ENCODE measurements at regions of chr10 and their contacts with region 1.

Region 1: GRCh38 chr10:128011175-128011979 is 104.5 kb downstream of the PTPRE start:
- DNase-seq: peak; percentile 86
- ATAC-seq: peak; percentile 97
- H3K4me3 Mint-ChIP-seq: no peak overlapping the region
- H3K27ac Mint-ChIP-seq: no peak overlapping the region
- H3K4me1 Mint-ChIP-seq: peaks cover 8% of the 10 kb centered on the region
- H3K27me3 Mint-ChIP-seq: peaks cover 8% of the 10 kb centered on the region
- CTCF ChIP-seq: peak; percentile 97

Region 2: DNA sequence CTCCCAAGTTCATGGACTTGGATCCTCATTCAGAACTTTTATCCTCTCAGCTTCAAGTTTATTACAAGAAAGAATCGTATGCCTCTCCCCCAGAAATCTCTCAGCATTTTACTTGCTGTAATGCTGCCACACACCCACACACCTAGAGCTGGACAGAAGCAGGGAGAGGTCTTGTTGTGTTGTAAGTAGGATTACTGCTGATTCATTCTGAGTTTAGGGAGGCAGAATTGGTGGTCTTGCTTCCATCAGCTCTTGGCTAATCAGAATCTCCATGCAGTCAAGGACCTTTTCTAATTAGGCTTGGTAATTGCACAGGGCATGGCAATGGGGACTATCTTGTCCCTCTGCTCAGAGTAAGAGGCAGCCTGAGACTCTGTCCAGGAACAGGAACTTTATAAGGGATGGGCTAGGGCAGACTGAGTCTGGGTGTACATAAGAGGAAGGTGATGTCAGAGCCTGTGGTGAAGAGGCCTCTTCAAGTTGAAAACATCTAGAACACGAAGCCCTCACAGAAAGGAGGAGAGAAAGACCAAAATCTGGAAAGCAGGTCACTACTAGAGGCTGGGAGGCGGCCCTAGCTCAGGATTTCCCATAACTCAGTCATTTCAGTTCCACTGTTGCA is 111.5 kb before region 1 on chr10:
- CTCF ChIA-PET with region 1: interaction called, 188 read pairs
- POLR2A ChIA-PET with region 1: no interaction called
- intact Hi-C with region 1: no loop called
- DNase-seq: no peak
- ATAC-seq: peak; percentile 37
- H3K4me3 Mint-ChIP-seq: no peak overlapping the region
- H3K27ac Mint-ChIP-seq: no peak overlapping the region
- H3K4me1 Mint-ChIP-seq: peaks cover 3% of the 10 kb centered on the region
- H3K27me3 Mint-ChIP-seq: peaks cover 10% of the 10 kb centered on the region
- CTCF ChIP-seq: no peak

Region 3: DNA sequence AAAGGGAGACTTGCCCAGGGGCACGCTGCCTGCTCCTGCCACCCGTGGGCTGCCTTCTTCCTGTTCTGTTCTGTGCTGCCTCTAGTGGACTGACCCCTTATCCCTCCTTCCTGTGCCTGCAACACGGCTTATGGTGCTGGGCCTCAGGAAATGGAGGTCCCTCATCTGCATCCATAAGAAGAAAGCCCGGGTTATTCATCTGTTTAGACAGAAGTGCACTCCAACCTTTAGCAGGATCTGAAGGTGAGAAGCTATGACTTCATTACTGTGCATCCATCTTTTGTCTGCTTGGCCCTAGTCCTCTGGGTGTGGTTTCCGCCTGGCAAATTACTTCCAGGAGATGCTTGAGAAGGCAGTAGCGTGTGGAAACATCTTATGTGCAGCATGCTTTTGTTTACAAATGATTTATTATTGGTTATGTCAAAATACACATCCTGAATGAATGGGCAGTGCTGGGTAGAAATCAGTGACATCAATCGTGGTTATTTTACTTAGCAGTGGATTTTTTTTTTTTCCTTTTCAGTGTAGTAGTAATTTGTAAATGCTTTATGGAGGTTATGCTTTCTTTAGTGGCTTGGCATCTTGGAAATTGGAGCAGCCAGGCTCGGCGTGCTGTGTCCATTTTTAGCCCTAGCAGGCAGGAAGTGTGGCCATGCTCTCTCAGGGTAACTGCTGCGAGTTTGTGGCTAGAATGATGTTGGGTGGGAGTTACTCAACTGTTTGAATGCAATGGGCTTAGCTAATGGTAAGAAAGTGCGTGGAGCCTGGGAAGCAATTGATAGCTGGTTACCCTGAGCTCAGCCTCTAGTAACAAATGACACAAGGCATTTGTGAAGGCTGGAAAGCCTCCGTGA is 91.7 kb before region 1 on chr10:
- CTCF ChIA-PET with region 1: interaction called, 12 read pairs
- POLR2A ChIA-PET with region 1: no interaction called
- intact Hi-C with region 1: no loop called
- DNase-seq: peak; percentile 24
- ATAC-seq: peak; percentile 64
- H3K4me3 Mint-ChIP-seq: no peak overlapping the region
- H3K27ac Mint-ChIP-seq: no peak overlapping the region
- H3K4me1 Mint-ChIP-seq: peaks cover 9% of the 10 kb centered on the region
- H3K27me3 Mint-ChIP-seq: no peaks in the 10 kb centered on the region
- CTCF ChIP-seq: no peak

Region 4: DNA sequence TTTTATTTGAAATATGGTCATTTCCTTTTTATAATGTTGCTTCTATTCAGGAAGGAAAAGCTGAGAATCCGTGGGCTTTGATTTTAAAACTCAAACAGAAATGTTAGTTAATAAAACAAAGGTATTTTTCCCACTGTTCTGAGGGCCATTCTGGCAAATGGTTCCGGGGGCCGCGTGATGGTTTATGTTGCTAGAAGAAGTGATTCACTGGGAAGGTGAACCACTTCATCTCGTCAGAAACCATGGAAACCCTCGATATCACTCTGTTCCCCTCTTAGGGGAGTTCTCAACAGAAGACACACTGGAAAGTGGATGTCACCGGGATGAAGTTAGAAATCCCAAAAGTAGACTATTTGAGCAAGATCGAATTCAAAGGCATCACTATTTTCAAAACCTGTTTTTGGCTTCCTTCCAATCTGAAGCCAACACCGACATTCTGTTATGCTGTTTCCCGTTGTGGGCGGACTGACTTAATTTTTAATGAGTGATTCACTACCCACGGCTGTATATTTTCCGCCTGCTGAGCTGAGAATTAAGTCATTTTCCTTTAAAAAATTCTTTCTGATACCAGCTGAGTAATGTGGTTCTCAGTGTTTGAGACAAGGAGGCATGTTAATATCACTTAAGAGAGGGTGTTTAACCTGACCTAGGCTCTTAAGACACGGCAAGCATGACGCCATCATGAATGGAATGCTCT is 20.4 kb before region 1 on chr10:
- CTCF ChIA-PET with region 1: interaction called, 33 read pairs
- POLR2A ChIA-PET with region 1: interaction called, 4 read pairs
- intact Hi-C with region 1: no loop called
- DNase-seq: peak; percentile 88
- ATAC-seq: peak; percentile 77
- H3K4me3 Mint-ChIP-seq: peak overlapping the region; percentile 50
- H3K27ac Mint-ChIP-seq: peak overlapping the region; percentile 95
- H3K4me1 Mint-ChIP-seq: peaks cover 48% of the 10 kb centered on the region
- H3K27me3 Mint-ChIP-seq: no peaks in the 10 kb centered on the region
- CTCF ChIP-seq: no peak

Region 5: GRCh38 chr10:128026614-128027300 is 15.4 kb after region 1 on chr10:
- CTCF ChIA-PET with region 1: interaction called, 20 read pairs
- POLR2A ChIA-PET with region 1: no interaction called
- intact Hi-C with region 1: no loop called
- DNase-seq: peak; percentile 84
- ATAC-seq: peak; percentile 87
- H3K4me3 Mint-ChIP-seq: no peak overlapping the region
- H3K27ac Mint-ChIP-seq: peak overlapping the region; percentile 75
- H3K4me1 Mint-ChIP-seq: peaks cover 31% of the 10 kb centered on the region
- H3K27me3 Mint-ChIP-seq: no peaks in the 10 kb centered on the region
- CTCF ChIP-seq: no peak

Region 6: GRCh38 chr10:128047351-128047750 is 36.0 kb after region 1 on chr10:
- CTCF ChIA-PET with region 1: interaction called, 16 read pairs
- POLR2A ChIA-PET with region 1: interaction called, 3 read pairs
- intact Hi-C with region 1: no loop called
- DNase-seq: peak; percentile 93
- ATAC-seq: peak; percentile 98
- H3K4me3 Mint-ChIP-seq: peak overlapping the region; percentile 90
- H3K27ac Mint-ChIP-seq: peak overlapping the region; percentile 95
- H3K4me1 Mint-ChIP-seq: peaks cover 41% of the 10 kb centered on the region
- H3K27me3 Mint-ChIP-seq: no peaks in the 10 kb centered on the region
- CTCF ChIP-seq: no peak

Region 7: DNA sequence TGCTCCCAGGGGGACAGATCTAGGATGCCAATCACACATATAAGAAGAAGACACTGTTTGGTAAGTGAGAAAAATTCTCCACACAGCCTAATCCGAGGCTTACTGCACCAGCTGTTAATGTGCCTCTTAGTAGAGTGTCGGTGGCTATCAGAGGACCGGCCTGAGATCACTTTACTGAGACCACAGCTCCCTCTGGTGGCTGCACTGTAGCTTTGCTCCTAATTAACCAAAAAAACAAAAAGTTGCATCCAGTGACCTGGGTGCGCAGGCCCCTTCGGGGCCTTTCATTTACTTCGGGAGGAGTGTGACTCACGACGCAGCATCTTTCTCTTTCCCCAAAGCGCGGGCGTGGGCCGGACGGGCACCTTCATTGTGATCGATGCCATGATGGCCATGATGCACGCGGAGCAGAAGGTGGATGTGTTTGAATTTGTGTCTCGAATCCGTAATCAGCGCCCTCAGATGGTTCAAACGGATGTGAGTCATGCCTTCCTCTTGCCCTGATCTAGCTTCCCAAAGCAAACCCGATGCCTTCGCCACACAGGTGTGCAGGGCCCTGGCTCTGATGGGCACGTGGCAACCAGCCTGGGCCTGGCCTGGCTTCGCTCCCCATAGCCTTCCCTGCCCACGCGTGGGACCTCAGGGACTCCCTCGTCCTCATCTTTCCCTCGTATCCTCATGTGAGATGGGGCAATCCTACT is 58.1 kb after region 1 on chr10:
- CTCF ChIA-PET with region 1: interaction called, 35 read pairs
- POLR2A ChIA-PET with region 1: no interaction called
- intact Hi-C with region 1: loop called (anchors 10 kb)
- DNase-seq: peak; percentile 81
- ATAC-seq: peak; percentile 27
- H3K4me3 Mint-ChIP-seq: no peak overlapping the region
- H3K27ac Mint-ChIP-seq: no peak overlapping the region
- H3K4me1 Mint-ChIP-seq: peaks cover 29% of the 10 kb centered on the region
- H3K27me3 Mint-ChIP-seq: no peaks in the 10 kb centered on the region
- CTCF ChIP-seq: peak; percentile 87

Measured in activated CD8-positive, alpha-beta T cell treated with anti-CD3 and anti-CD28 coated beads for 36 hours (primary cell).